ENCODE measurements at regions of chr1 and their contacts with region 1.

Region 1: GRCh38 chr1:225999227-225999911 is at the start of gene SDE2:
- DNase-seq: peak; percentile 98 to 100 (median 100)
- ATAC-seq: peak; percentile 66 to 73
- H3K4me3 Mint-ChIP-seq: peak within 1 kb of the TSS; percentile 88 to 100 (median 100)
- H3K27ac Mint-ChIP-seq: peak within 1 kb of the TSS; percentile 97 to 100 (median 100)
- H3K4me1 Mint-ChIP-seq: peaks cover 41 to 89% (median 78%) of the 10 kb centered on the region in 4 donors
- H3K27me3 Mint-ChIP-seq: peaks cover 0 to 3% (median 0%) of the 10 kb centered on the region in 5 donors
- polyA plus RNA-seq, gene SDE2: 5.1 to 12.0 (median 7.2) TPM

Region 2: DNA sequence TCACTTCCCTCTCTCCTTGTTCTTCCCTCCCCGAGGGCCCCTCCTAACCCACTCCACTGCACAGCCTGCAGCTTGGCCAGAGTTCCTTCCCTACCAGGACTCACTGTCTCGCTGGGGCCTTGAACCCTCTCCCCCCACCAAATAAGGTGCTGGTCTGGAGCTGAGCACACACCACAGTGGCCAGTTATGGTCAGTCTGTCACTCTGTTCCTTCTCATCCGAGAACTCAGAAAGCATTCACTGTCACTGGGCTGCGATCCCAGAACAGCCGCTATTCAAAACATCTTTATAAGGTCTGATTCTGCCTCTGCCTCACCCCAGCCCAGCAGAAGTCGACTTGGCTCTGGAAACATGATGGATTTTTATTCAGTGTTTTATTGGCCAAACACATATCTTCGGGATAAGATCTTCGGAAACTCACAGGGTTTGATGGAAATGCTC is 551.7 kb before region 1 on chr1:
- POLR2A ChIA-PET with region 1: interaction called, 26 read pairs
- DNase-seq: peak in 1 of 10 donors; percentile 5
- ATAC-seq: no peak
- H3K4me3 Mint-ChIP-seq: no peak overlapping the region
- H3K27ac Mint-ChIP-seq: peak overlapping the region in 4 of 10 donors; percentile 46 to 91 (median 56)
- H3K4me1 Mint-ChIP-seq: peaks cover 26 to 70% (median 68%) of the 10 kb centered on the region in 4 donors
- H3K27me3 Mint-ChIP-seq: no peaks in the 10 kb centered on the region

Region 3: DNA sequence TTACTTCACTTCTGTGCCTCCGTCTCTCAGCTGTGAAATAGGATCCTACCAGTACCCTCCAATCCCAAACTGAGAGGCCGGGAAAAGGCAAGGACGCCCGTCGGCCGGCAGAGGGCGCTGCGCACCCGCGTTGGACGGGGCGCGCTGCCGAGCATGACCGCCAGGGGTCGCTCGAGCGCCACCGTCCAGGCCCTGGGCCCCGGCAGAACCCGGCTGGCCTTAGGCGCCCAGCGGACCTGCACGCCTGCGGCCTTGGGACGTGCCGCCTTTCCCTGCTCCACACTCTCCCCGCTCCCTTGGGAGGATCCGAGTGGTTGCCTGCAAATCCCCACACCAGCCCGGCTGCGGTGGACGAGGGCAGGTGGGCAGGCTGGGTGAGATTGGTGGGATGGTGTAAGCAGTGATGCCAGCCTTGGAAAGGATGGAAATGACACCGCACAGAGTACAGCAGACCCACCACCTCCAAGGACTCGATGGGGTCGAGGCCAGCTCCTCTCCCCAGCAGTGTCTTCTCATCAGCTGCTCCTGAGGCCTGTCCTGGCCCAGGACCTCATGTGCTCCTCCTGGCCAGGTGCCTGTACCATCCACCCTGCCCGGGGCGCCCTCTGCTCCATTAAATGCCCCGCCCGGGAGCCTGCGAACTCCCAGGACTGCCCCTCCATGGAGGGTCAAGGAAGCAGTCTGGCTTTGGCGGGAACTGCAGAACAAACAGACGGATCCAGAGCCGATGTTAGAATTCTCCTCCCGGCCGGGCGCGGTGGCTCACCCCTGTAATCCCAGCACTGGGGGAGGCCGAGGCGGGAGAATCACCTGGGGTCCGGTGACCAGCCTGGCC is 524.2 kb before region 1 on chr1:
- POLR2A ChIA-PET with region 1: interaction called, 12 read pairs
- DNase-seq: peak; percentile 45 to 87 (median 74)
- ATAC-seq: peak; percentile 57 to 78
- H3K4me3 Mint-ChIP-seq: peak overlapping the region in 1 of 10 donors; percentile 45
- H3K27ac Mint-ChIP-seq: peak overlapping the region in 5 of 10 donors; percentile 58 to 83 (median 73)
- H3K4me1 Mint-ChIP-seq: peaks cover 26 to 64% (median 56%) of the 10 kb centered on the region in 4 donors
- H3K27me3 Mint-ChIP-seq: no peaks in the 10 kb centered on the region

Region 4: GRCh38 chr1:225896937-225897549 is 102.3 kb before region 1 on chr1:
- POLR2A ChIA-PET with region 1: interaction called, 22 read pairs
- DNase-seq: peak; percentile 21 to 92 (median 80)
- ATAC-seq: peak; percentile 88 to 92
- H3K4me3 Mint-ChIP-seq: peak overlapping the region; percentile 59 to 89 (median 82)
- H3K27ac Mint-ChIP-seq: peak overlapping the region; percentile 94 to 100 (median 97)
- H3K4me1 Mint-ChIP-seq: peaks cover 27 to 64% (median 60%) of the 10 kb centered on the region in 4 donors
- H3K27me3 Mint-ChIP-seq: no peaks in the 10 kb centered on the region

Region 5: GRCh38 chr1:225911191-225912130 is 87.9 kb before region 1 on chr1:
- POLR2A ChIA-PET with region 1: no interaction called
- DNase-seq: peak; percentile 51 to 85 (median 76)
- ATAC-seq: peak; percentile 94 to 96
- H3K4me3 Mint-ChIP-seq: peak overlapping the region in 5 of 10 donors; percentile 14 to 62 (median 25)
- H3K27ac Mint-ChIP-seq: peak overlapping the region in 9 of 10 donors; percentile 19 to 84 (median 73)
- H3K4me1 Mint-ChIP-seq: peaks cover 25 to 56% (median 39%) of the 10 kb centered on the region in 4 donors
- H3K27me3 Mint-ChIP-seq: no peaks in the 10 kb centered on the region

Region 6: DNA sequence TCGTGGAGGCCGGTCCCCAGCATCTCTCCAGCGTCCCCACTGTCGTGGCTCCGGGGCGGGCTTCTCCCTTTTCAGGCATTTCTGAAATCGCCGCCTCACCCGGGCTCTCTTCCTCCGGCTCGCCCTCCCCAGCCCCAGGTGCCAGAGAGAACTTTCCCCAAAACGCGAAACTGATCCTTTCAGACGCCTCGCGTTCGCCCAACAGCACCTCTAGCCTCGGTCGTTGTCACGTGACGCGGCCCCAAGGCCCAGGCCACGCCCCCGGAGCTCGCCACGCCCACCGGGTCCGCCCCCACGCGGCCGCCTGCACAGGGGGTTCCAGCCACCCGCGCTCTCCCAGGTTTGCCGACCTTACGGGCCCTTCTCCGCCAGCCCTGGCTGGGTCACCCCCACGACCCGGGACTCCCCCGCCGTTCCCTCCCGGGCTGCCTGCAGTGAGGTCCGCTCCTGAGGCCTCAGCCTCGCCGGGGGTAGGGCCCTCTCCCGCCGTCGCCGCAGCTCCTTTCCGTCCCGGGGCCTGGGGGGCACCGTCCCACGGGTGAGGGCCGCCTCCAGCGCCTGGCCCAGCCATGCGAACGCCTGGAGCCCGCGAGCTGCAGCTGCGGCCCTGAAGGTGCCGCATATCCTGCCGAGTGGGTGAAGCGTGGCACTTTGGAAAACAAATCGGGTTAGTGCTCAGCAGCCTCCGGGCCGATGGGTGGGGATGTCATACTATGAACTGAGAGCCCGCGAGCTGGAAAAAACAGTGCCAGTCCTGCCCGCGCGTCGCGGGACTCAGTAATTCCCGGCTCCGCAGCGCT is 84.1 kb after region 1 on chr1:
- POLR2A ChIA-PET with region 1: interaction called, 13 read pairs
- DNase-seq: peak; percentile 84 to 96 (median 91)
- ATAC-seq: peak; percentile 94
- H3K4me3 Mint-ChIP-seq: peak overlapping the region; percentile 87 to 97 (median 92)
- H3K27ac Mint-ChIP-seq: peak overlapping the region in 8 of 10 donors; percentile 59 to 92 (median 84)
- H3K4me1 Mint-ChIP-seq: peaks cover 5 to 18% (median 11%) of the 10 kb centered on the region in 4 donors
- H3K27me3 Mint-ChIP-seq: peaks cover 0 to 3% (median 0%) of the 10 kb centered on the region in 5 donors

Region 7: DNA sequence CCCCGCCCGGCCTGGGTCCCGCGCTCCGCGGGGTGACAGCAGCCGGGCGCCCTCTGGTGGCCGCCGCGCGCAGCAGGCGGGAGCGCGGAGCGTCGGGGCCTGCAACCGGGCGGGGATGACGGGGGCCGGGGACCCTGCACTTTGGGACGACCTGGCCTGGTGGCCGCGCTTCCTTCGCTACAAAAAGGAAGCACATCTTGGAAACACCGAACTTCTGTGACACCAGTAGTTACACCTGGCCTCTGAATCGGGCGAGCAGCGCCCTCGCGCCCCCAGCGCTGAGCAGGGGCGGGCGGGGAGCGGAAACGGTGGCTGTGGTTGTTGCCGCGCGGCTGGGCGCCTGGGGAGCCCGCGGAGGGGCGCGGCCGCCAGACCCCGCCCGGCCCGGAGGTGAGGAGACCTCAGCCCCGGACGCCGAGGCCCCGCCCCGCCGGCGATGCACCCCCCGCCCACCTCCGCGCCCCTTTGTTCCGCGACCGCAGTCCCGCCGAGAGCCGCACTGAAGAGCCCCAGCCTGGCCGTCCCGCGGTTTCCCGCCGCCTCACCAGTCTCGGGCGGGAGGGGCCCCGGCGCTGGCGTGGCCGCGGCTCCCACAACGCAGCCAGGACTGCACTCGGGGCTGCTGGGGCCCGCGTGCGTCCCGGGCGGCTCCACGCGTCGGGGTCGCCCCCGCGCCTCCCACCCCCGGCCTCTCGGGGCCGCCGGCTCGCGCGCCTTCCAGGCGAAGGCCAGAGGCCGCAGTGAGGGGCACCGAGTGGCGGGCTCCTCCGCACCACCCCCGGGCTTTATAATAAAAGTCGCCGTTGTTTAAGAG is 122.4 kb after region 1 on chr1:
- POLR2A ChIA-PET with region 1: interaction called, 15 read pairs
- DNase-seq: peak; percentile 51 to 87 (median 74)
- ATAC-seq: peak; percentile 64 to 69
- H3K4me3 Mint-ChIP-seq: peak overlapping the region; percentile 49 to 89 (median 82)
- H3K27ac Mint-ChIP-seq: peak overlapping the region in 6 of 10 donors; percentile 36 to 98 (median 84)
- H3K4me1 Mint-ChIP-seq: peaks cover 17 to 67% (median 38%) of the 10 kb centered on the region in 4 donors
- H3K27me3 Mint-ChIP-seq: peaks cover 0 to 3% (median 0%) of the 10 kb centered on the region in 5 donors